ENCODE measurements at regions of chr13 and their contacts with region 1.

Region 1: GRCh38 chr13:114226699-114227323 is 7.9 kb upstream of the CDC16 start:
- DNase-seq: peak; percentile 75
- ATAC-seq: peak; percentile 95
- H3K4me3 ChIP-seq: peak overlapping the region in 1 of 2 experiments; percentile 7; a peak in 1 of 4 replicates
- H3K27ac ChIP-seq: no peak overlapping the region
- H3K4me1 ChIP-seq: peaks cover 0 to 19% of the 10 kb centered on the region in 2 experiments; a peak in 3 of 4 replicates
- H3K27me3 ChIP-seq: no peaks in the 10 kb centered on the region
- CTCF ChIP-seq: peak in 2 of 3 experiments; percentile 90 to 93; a peak in 4 of 6 replicates
- POLR2A ChIP-seq: no peak
- RAD21 ChIP-seq: no peak

Region 2: DNA sequence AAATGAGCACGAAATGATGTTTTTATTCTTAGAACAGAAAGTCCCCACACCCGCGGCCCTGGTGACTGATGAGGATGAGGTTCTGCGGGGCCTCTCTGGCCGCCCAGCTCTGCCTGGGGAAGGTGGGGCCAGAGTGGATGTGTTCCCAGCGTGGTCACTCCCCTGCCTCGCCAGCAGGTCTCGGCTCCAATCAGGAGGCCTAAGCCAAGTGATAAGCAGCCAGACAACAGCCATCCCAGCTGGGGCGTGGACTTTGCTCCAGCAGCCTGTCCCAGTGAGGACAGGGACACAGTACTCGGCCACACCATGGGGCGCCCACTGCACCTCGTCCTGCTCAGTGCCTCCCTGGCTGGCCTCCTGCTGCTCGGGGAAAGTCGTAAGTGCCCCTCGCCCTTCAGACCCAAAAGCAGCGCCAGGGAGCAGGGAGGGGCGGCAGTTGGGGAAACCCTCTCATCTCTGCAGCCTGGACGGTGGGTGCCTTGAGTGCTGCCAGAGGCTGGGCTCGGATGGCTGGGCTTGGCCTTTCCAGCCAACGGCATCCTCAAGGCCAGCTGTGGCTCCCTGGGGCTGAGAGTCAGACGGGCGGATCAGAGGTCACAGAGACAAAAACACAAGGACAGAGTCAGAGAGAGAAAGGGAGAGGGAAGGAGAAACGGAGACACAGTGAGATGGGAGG is 1104.1 kb before region 1 on chr13 and contains the start of gene F10:
- CTCF ChIA-PET with region 1: no interaction called
- POLR2A ChIA-PET with region 1: no interaction called
- RAD21 ChIA-PET with region 1: no interaction called
- intact Hi-C with region 1: no loop called
- DNase-seq: peak; percentile 50
- ATAC-seq: peak; percentile 98
- H3K4me3 ChIP-seq: peak within 1 kb of the TSS; percentile 30 to 46
- H3K27ac ChIP-seq: no peak within 1 kb of the TSS
- H3K4me1 ChIP-seq: peaks cover 4 to 14% of the 10 kb centered on the region in 2 experiments; a peak in 3 of 4 replicates
- H3K27me3 ChIP-seq: peaks cover 5% of the 10 kb centered on the region; the same call in 1 of the 2 replicates
- CTCF ChIP-seq: no peak
- POLR2A ChIP-seq: no peak
- RAD21 ChIP-seq: no peak
- total RNA-seq, gene F10: 4.0 TPM

Region 3: GRCh38 chr13:113620036-113620796 is 606.6 kb before region 1 on chr13:
- CTCF ChIA-PET with region 1: no interaction called
- POLR2A ChIA-PET with region 1: no interaction called
- RAD21 ChIA-PET with region 1: no interaction called
- intact Hi-C with region 1: loop called (anchors 2 kb)
- DNase-seq: no peak
- ATAC-seq: no peak
- H3K4me3 ChIP-seq: no peak overlapping the region
- H3K27ac ChIP-seq: no peak overlapping the region; the same call in 1 of the 2 replicates
- H3K4me1 ChIP-seq: no peaks in the 10 kb centered on the region
- H3K27me3 ChIP-seq: no peaks in the 10 kb centered on the region
- CTCF ChIP-seq: no peak
- POLR2A ChIP-seq: no peak
- RAD21 ChIP-seq: no peak

Region 4: GRCh38 chr13:113816946-113817859 is 409.6 kb before region 1 on chr13:
- CTCF ChIA-PET with region 1: no interaction called
- POLR2A ChIA-PET with region 1: no interaction called
- RAD21 ChIA-PET with region 1: no interaction called
- intact Hi-C with region 1: loop called (anchors 1 kb)
- DNase-seq: peak; percentile 79
- ATAC-seq: peak; percentile 58
- H3K4me3 ChIP-seq: peak overlapping the region; percentile 94 to 100
- H3K27ac ChIP-seq: peak overlapping the region; percentile 62
- H3K4me1 ChIP-seq: peaks cover 9 to 23% of the 10 kb centered on the region in 2 experiments
- H3K27me3 ChIP-seq: no peaks in the 10 kb centered on the region
- CTCF ChIP-seq: peak in 2 of 3 experiments; percentile 81 to 87; a peak in 4 of 6 replicates
- POLR2A ChIP-seq: no peak
- RAD21 ChIP-seq: no peak

Region 5: DNA sequence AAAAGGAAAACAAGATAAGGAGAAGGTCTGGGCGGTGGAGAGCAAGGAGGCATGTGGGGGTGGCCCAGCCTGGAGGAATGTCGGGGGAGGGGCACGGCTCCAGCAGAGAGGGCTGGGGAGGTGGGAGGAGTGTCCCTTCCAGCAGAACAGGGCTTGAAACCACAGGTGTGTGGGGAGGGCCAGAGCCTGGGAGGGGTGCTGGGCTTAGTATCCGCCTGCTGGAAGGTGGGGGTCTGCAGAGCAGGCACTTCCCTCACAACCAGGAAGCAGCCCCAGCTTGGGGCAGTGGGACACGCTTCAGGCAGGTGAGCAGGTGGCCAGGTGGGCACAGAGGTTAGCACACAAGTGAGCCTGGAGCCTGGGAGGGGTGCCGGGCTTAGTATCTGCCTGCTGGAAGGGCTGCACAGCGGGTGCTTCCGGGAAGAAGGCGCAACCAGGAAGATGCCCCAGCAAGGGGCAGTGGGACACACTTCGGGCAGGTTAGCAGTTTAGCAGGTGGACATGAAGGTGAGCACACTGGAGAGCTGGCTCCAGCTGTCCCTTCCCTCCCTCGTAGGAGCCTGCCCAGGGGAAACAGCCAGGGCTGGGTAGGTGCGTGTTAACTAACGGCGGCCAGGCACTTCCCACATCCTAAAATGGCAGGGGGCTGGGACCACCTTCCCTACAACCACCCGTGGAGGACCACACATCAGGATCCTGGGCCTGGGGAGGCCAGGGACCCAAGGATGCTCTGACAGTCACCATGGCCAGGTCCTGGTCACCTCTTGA is 366.0 kb before region 1 on chr13:
- CTCF ChIA-PET with region 1: no interaction called
- POLR2A ChIA-PET with region 1: no interaction called
- RAD21 ChIA-PET with region 1: no interaction called
- intact Hi-C with region 1: loop called (anchors 2 kb)
- DNase-seq: no peak
- ATAC-seq: no peak
- H3K4me3 ChIP-seq: no peak overlapping the region
- H3K27ac ChIP-seq: no peak overlapping the region; the same call in 1 of the 2 replicates
- H3K4me1 ChIP-seq: peaks cover 10 to 39% of the 10 kb centered on the region in 2 experiments
- H3K27me3 ChIP-seq: no peaks in the 10 kb centered on the region
- CTCF ChIP-seq: no peak
- POLR2A ChIP-seq: no peak
- RAD21 ChIP-seq: no peak

Region 6: DNA sequence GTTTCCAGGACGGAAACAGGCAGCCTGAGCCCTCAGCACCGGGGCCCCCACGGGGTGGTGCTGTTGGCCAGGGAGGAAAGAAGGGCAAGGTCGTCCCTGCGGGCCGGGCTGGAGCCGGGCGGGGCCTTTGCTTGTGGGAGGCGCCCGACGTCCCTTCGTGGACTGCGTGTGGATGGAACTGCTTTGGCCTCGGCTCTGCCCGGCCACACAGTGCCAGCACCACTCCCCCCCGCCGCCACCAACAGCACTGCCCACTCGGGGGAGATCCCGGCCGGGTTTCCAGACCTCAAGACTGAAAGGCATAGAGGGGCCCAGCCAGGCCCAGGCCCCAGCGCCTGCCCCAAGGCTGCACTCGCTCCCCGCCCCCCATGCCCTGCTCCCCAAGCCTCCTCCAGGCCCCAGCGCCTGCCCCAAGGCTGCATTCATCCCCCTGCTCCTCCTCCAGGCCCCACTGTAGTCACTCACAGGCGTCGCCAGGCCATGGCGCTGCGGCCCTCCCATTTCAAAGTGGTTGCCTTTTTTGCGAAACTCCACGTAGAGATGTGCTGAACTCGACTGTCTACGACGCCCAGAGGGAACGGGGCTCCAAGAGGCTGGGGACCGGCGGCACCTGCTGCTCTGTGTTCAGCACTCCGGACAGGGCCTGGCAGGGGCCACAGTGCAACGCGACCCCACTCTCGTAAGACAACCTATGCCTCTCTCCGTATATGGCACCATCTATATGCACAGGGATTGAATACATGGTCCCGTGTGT is 275.4 kb before region 1 on chr13:
- CTCF ChIA-PET with region 1: interaction called, 3 read pairs
- POLR2A ChIA-PET with region 1: no interaction called
- RAD21 ChIA-PET with region 1: no interaction called
- intact Hi-C with region 1: loop called (anchors 1 kb)
- DNase-seq: peak; percentile 57
- ATAC-seq: peak; percentile 97
- H3K4me3 ChIP-seq: no peak overlapping the region
- H3K27ac ChIP-seq: peak overlapping the region; percentile 5; the same call in 1 of the 2 replicates
- H3K4me1 ChIP-seq: peaks cover 0 to 10% of the 10 kb centered on the region in 2 experiments; a peak in 3 of 4 replicates
- H3K27me3 ChIP-seq: no peaks in the 10 kb centered on the region
- CTCF ChIP-seq: peak in 2 of 3 experiments; percentile 79 to 89; a peak in 4 of 6 replicates
- POLR2A ChIP-seq: no peak
- RAD21 ChIP-seq: no peak

Region 7: GRCh38 chr13:114143806-114144605 is 82.8 kb before region 1 on chr13:
- CTCF ChIA-PET with region 1: no interaction called
- POLR2A ChIA-PET with region 1: no interaction called
- RAD21 ChIA-PET with region 1: no interaction called
- intact Hi-C with region 1: loop called (anchors 1 kb)
- DNase-seq: peak; percentile 63
- ATAC-seq: peak; percentile 100
- H3K4me3 ChIP-seq: no peak overlapping the region
- H3K27ac ChIP-seq: no peak overlapping the region; the same call in 1 of the 2 replicates
- H3K4me1 ChIP-seq: peaks cover 4 to 10% of the 10 kb centered on the region in 2 experiments; a peak in 3 of 4 replicates
- H3K27me3 ChIP-seq: no peaks in the 10 kb centered on the region
- CTCF ChIP-seq: peak in 2 of 3 experiments; percentile 64 to 75; a peak in 4 of 6 replicates
- POLR2A ChIP-seq: no peak
- RAD21 ChIP-seq: no peak

Region 8: GRCh38 chr13:114151565-114152284 is 75.1 kb before region 1 on chr13:
- CTCF ChIA-PET with region 1: no interaction called
- POLR2A ChIA-PET with region 1: no interaction called
- RAD21 ChIA-PET with region 1: no interaction called
- intact Hi-C with region 1: loop called (anchors 2 kb)
- DNase-seq: peak; percentile 53
- ATAC-seq: peak; percentile 97
- H3K4me3 ChIP-seq: peak overlapping the region; percentile 4 to 47
- H3K27ac ChIP-seq: peak overlapping the region; percentile 5; the same call in 1 of the 2 replicates
- H3K4me1 ChIP-seq: peaks cover 10 to 21% of the 10 kb centered on the region in 2 experiments
- H3K27me3 ChIP-seq: no peaks in the 10 kb centered on the region
- CTCF ChIP-seq: peak in 2 of 3 experiments; percentile 29 to 43; a peak in 3 of 6 replicates
- POLR2A ChIP-seq: no peak
- RAD21 ChIP-seq: no peak

Measured in HCT116 (cell line).